A549 (cell line): ENCODE measurements at regions of chr22 and their contacts with region 1.

Region 1: DNA sequence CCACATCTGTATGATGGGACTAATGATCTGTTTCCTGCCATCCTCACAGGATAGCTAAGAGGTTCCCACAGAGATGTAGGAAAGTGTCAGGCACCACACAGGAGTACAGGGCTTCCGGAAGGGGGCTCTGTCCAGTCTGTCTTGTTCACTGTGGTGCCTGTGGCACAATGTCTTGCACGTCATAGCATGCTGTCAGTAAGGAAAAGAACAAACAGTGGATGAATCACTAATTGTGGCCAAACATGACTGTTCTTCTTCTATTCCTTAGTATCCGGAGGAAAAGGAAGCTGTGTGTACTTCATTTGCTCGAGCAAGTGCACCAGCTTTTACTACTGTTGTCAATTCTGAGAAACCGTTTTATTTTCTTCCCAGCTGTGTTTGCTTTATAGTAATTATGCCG is 73.4 kb upstream of the YWHAH start:
- DNase-seq: peak; percentile 68 to 74
- ATAC-seq: peak; percentile 98 to 99
- H3K4me3 ChIP-seq: no peak overlapping the region
- H3K27ac ChIP-seq: peak overlapping the region in 1 of 2 experiments; percentile 33; a peak in 1 of 6 replicates
- H3K4me1 ChIP-seq: peaks cover 18% of the 10 kb centered on the region
- CTCF ChIP-seq: peak; percentile 37
- EP300 ChIP-seq: no peak
- POLR2A ChIP-seq: no peak
- RAD21 ChIP-seq: peak in 1 of 2 experiments; percentile 42; a peak in 3 of 5 replicates

Region 2: GRCh38 chr22:31850135-31850534 is 20.8 kb before region 1 on chr22:
- CTCF ChIA-PET with region 1: no interaction called
- POLR2A ChIA-PET with region 1: no interaction called
- DNase-seq: no peak
- ATAC-seq: no peak
- H3K4me3 ChIP-seq: no peak overlapping the region
- H3K27ac ChIP-seq: no peak overlapping the region
- H3K4me1 ChIP-seq: no peaks in the 10 kb centered on the region
- CTCF ChIP-seq: no peak
- EP300 ChIP-seq: no peak
- POLR2A ChIP-seq: no peak
- RAD21 ChIP-seq: no peak

Region 3: GRCh38 chr22:31892080-31892433 is 21.2 kb after region 1 on chr22:
- CTCF ChIA-PET with region 1: no interaction called
- POLR2A ChIA-PET with region 1: no interaction called
- DNase-seq: no peak
- ATAC-seq: no peak
- H3K4me3 ChIP-seq: no peak overlapping the region
- H3K27ac ChIP-seq: no peak overlapping the region
- H3K4me1 ChIP-seq: no peaks in the 10 kb centered on the region
- CTCF ChIP-seq: no peak
- EP300 ChIP-seq: no peak
- POLR2A ChIP-seq: no peak
- RAD21 ChIP-seq: no peak

Region 4: GRCh38 chr22:31958625-31959239 is 87.8 kb after region 1 on chr22:
- CTCF ChIA-PET with region 1: interaction called, 10 read pairs
- POLR2A ChIA-PET with region 1: no interaction called
- DNase-seq: no peak
- ATAC-seq: no peak
- H3K4me3 ChIP-seq: no peak overlapping the region
- H3K27ac ChIP-seq: no peak overlapping the region
- H3K4me1 ChIP-seq: peaks cover 9% of the 10 kb centered on the region; the same call in 2 of the 3 replicates
- CTCF ChIP-seq: no peak
- EP300 ChIP-seq: no peak
- POLR2A ChIP-seq: no peak
- RAD21 ChIP-seq: no peak